Sigmoid colon (tissue), 7 donors: ENCODE measurements at regions of chr19 and their contacts with region 1.

Region 1: DNA sequence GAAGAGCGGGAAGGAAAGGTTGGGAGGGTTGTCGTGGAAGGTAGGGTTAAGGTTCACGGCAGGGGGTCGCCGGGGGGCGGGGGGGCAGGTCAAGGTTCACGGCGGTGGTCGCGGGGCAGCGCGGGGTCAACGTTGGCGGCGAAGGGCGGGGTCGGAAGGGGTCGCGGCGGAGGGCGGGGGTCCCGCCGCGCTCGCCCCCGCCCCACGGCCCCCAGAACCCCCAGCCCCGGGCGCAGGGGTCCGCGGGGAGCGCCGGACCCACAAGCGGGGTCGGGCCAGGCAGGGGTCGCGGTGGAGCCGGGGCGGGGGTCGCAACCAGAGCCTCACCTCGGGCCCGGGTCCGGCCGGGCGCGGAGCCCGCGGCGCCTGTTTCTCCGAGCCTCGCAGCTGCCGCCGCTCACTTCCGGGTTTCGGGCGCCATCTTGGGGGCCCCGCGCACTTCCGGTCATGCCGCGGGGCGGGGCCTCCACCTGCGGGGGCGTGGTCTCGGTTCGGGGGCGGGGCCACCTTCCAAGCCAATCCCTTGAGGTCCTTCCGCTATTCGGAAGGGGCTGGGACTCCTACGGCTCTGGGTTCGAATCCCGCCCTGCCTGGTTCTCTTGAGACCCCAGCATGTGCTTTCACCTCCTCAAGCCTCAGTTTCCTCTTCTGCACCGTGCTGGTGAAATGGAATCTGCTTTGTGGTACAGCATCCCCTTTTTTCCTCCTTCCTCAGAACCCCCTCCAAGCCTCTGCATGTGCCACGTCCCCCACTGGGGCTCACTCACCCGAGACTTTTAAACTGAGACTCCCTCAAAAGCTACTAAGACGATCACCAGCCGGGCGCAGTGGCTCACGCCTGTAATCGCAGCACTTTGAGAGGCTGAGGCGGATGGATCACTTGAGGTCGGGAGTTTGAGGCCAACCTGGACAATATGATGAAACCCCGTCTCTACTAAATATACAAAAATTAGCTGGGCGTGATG is at the start of gene SBNO2:
- DNase-seq: peak; percentile 96
- H3K4me3 ChIP-seq: peak within 1 kb of the TSS; percentile 49 to 97 (median 87)
- H3K27ac ChIP-seq: peak within 1 kb of the TSS; percentile 82 to 99 (median 96)
- H3K4me1 ChIP-seq: peaks cover 0 to 50% (median 40%) of the 10 kb centered on the region in 4 donors
- H3K27me3 ChIP-seq: no peaks in the 10 kb centered on the region
- CTCF ChIP-seq: no peak
- EP300 ChIP-seq: no peak
- POLR2A ChIP-seq: peak; percentile 20 to 28
- total RNA-seq, gene SBNO2: 6.8 to 91.9 (median 14.7) TPM

Region 2: GRCh38 chr19:984165-984967 is 189.8 kb before region 1 on chr19 and contains the start of gene WDR18:
- intact Hi-C with region 1: no loop called
- DNase-seq: peak; percentile 97
- H3K4me3 ChIP-seq: peak within 1 kb of the TSS; percentile 76 to 92 (median 84)
- H3K27ac ChIP-seq: peak within 1 kb of the TSS; percentile 81 to 88 (median 86)
- H3K4me1 ChIP-seq: peaks cover 0 to 29% (median 26%) of the 10 kb centered on the region in 4 donors
- H3K27me3 ChIP-seq: no peaks in the 10 kb centered on the region
- CTCF ChIP-seq: peak in 1 of 4 experiments; percentile 28
- EP300 ChIP-seq: no peak
- POLR2A ChIP-seq: peak; percentile 8 to 49
- total RNA-seq, gene WDR18: 14.3 to 33.1 (median 30.4) TPM

Region 3: GRCh38 chr19:1113033-1113985 is 60.8 kb before region 1 on chr19:
- intact Hi-C with region 1: loop called (anchors 2 kb)
- DNase-seq: peak; percentile 98
- H3K4me3 ChIP-seq: peak overlapping the region in 2 of 4 donors; percentile 20 to 25
- H3K27ac ChIP-seq: peak overlapping the region; percentile 80 to 85 (median 82)
- H3K4me1 ChIP-seq: peaks cover 0 to 28% (median 27%) of the 10 kb centered on the region in 4 donors
- H3K27me3 ChIP-seq: no peaks in the 10 kb centered on the region
- CTCF ChIP-seq: peak; percentile 94 to 98 (median 95)
- EP300 ChIP-seq: no peak
- POLR2A ChIP-seq: no peak

Region 4: DNA sequence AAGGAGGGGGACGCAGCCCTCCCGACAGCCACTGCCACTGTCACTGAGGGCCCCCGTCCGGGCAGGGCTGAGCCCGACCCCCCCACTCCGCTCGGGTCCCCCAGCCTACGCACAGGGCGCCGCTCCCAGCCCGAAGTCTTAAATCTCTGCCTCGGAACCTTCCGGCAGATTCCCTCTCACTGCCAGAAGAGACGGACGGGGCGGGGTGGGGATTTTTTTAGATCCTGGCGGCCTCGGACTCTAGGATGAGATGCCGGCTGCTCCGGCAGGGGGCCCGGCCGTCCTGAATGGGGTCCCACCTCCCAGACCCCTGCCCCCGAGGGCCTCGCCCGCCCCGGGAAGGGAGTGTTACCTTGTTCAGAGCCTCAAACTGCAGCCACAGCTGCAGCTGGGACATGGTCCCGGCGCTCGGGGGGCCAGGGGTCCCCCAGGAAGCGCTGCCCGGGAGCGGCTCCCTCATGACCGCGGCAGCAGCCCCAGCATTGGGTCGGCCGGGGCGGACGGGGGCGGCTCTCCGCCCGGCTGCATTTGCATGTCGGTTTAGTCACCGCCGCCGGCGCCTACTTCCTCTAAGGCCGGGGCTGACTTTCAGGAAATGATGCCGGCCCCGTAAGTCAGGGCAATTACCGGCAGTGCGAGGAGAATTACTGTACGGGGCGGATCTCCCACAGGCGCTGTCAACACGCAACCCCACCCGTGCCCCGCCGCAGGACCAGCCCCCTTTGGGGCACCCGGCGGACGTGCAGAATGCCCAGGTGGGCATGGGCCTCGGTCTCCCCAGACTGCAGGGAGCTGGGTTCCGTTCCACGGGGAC is 42.2 kb before region 1 on chr19:
- intact Hi-C with region 1: loop called (anchors 5 kb)
- DNase-seq: peak; percentile 91
- H3K4me3 ChIP-seq: peak overlapping the region; percentile 53 to 68 (median 60)
- H3K27ac ChIP-seq: peak overlapping the region; percentile 83 to 94 (median 90)
- H3K4me1 ChIP-seq: peaks cover 0 to 75% (median 59%) of the 10 kb centered on the region in 4 donors
- H3K27me3 ChIP-seq: no peaks in the 10 kb centered on the region
- CTCF ChIP-seq: peak in 1 of 4 experiments; percentile 44
- EP300 ChIP-seq: peak; percentile 16 to 91 (median 60)
- POLR2A ChIP-seq: no peak